PC-9 (cell line): ENCODE measurements at regions of chr2 and their contacts with region 1.

Region 1: DNA sequence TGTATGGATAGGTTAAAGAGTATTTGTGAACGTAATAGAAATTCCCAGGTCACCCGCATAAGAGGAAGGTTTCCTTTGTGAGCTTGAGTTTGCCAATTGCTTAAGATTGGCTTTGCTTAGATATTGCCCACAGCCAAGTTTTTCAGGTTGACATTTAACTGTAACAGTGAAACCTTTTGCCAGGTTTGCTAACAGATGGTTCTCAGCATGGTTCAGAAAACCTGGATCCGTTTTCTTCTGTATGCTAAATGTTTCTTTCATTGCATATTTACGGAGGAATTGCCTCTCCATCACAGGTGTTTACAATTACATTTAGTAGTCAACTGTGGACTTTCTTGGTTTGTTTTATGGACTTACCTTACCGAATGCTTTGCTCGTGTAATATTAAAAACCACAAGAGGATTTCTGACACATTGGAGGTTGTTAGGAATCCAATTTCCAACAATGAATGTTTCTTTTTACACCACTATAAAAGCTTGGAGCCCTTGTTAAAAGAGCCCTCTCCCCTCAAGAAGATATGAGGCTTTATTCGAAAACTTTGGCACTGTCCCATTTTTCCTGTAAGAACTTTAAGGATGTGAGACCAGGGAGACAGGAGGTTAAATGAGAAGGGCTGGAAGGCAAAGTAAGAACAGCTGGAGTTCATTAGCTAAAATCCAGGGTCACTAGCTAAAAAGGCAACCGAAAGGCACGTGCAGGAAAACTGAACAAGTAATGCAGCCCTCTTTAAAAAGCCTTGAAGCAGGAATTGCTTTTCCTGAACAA is 7.8 kb downstream of the CDK15 start:
- DNase-seq: no peak
- H3K4me3 ChIP-seq: no peak overlapping the region
- H3K27ac ChIP-seq: no peak overlapping the region
- H3K4me1 ChIP-seq: no peaks in the 10 kb centered on the region
- H3K27me3 ChIP-seq: no peaks in the 10 kb centered on the region
- CTCF ChIP-seq: no peak

Region 2: DNA sequence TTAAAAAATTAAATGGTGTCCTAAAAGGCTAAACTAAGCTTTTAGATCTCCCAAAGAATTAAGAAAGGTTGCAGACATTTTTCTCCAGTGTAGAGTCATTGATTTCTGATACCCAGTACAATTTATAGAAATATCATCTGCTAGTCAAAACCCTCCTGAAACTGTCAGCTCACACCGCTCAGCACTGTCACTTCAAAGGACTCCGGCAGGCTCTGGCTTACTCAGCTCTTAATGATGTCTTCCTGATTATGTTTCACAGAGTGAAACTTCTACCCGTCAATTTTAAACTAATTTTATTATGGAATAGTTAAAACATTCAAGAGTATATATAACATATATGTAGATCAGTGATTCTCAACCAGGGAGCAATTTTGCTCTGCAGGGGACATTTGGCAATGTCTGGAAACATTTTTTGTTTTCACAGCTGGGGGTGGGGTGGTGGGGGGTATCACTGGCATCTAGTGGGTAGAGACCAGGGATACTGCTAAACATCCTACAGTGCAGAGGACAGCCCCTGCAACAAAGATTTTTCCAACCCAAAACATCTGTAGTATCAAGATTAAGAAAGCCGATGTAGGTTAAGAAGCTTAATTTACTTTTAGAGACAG is 23.8 kb after region 1 on chr2:
- CTCF ChIA-PET with region 1: no interaction called
- POLR2A ChIA-PET with region 1: no interaction called
- intact Hi-C with region 1: loop called (anchors 2 kb)
- DNase-seq: no peak
- H3K4me3 ChIP-seq: no peak overlapping the region
- H3K27ac ChIP-seq: no peak overlapping the region
- H3K4me1 ChIP-seq: no peaks in the 10 kb centered on the region
- H3K27me3 ChIP-seq: no peaks in the 10 kb centered on the region
- CTCF ChIP-seq: no peak

Region 3: GRCh38 chr2:201866643-201867473 is 52.7 kb after region 1 on chr2:
- CTCF ChIA-PET with region 1: no interaction called
- POLR2A ChIA-PET with region 1: no interaction called
- intact Hi-C with region 1: loop called (anchors 2 kb)
- DNase-seq: peak in 1 of 2 experiments; percentile 53
- H3K4me3 ChIP-seq: no peak overlapping the region
- H3K27ac ChIP-seq: no peak overlapping the region
- H3K4me1 ChIP-seq: peaks cover 16% of the 10 kb centered on the region
- H3K27me3 ChIP-seq: no peaks in the 10 kb centered on the region
- CTCF ChIP-seq: no peak